Dendritic cell treated with granulocyte-macrophage colony-stimulating factor and Interleukin-4, amounts not matched to agents 40 ng/mL and 50 ng/mL, for 4 days (primary cell): ENCODE measurements at regions of chr14 and their contacts with region 1.

Region 1: DNA sequence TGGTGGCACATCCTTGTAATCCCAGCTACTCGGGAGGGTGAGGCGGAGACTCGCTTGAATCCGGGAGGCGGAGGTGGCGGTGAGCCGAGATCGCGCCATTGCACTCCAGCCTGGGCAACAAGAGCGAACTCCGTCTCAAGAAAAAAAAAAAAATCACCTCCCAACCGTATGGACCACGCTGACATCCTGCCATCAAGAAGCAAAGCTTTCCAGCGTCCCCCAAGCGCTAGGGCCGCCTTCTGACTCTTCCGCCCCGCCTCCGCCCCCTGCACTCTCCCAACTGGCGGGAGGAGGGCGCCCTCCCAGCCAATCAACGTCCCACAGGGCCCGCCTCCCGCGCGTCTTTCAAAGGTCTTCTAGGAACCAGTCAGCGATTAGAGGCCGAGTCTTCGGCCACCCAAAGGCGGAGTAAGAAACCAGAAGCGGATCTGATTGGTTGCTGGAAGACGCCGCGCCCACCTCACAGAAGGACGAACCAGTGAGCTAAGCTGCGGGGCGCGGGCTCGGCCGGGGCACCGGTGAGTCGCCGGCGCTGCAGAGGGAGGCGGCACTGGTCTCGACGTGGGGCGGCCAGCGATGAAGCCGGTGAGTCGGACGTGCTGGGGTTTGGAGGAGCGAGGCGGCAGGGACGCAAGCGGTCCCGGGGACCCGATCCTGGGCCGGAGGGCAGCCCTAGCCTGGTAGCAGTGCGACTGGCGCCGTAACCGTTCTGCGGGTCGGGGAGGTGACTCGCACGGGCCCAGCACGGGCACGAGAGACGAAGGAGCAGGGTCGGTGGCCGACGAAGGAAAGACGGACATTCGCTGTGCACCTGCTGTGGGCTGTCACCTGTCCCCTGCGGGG is at the start of gene CDKN3:
- H3K4me3 Mint-ChIP-seq: peak within 1 kb of the TSS; percentile 87
- H3K27ac Mint-ChIP-seq: peak within 1 kb of the TSS; percentile 73
- H3K4me1 Mint-ChIP-seq: peaks cover 19% of the 10 kb centered on the region
- H3K27me3 Mint-ChIP-seq: no peaks in the 10 kb centered on the region

Region 2: DNA sequence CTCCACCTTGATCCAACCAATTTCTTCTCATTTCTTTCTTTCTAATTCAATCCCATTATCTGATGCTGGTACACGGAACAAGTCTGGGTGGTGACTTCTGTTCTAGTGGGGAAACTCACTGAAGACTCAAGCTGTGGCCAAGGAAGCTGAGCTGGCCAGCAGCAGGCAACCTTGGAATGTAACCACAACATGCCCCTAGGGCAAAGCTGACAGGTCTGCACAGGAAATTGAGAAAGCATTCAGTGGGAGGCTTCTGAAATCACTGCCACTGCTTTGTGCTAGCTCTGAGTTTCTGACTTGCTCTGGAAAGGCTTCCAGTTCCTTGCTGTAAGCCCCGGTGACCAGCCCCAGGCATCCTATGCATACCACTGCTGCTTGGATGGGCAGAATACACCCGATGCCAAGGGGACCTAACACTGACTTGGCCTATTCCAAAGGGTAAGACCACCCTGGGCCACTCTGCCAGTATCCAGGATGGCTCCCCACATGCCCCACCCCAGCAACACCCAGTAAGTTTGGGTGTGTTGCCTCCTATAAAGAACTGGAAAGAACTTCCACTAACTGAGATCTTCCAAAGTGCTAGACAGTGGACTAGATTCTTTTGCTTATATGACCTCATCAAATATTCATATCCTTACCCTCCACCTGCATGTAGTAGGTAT is 84.4 kb before region 1 on chr14:
- intact Hi-C with region 1: no loop called
- H3K4me3 Mint-ChIP-seq: no peak overlapping the region
- H3K27ac Mint-ChIP-seq: no peak overlapping the region
- H3K4me1 Mint-ChIP-seq: no peaks in the 10 kb centered on the region
- H3K27me3 Mint-ChIP-seq: peaks cover 7% of the 10 kb centered on the region

Region 3: GRCh38 chr14:54356172-54356571 is 40.5 kb before region 1 on chr14:
- intact Hi-C with region 1: no loop called
- H3K4me3 Mint-ChIP-seq: no peak overlapping the region
- H3K27ac Mint-ChIP-seq: no peak overlapping the region
- H3K4me1 Mint-ChIP-seq: peaks cover 26% of the 10 kb centered on the region
- H3K27me3 Mint-ChIP-seq: no peaks in the 10 kb centered on the region

Region 4: GRCh38 chr14:54366736-54367735 is 29.7 kb before region 1 on chr14:
- intact Hi-C with region 1: no loop called
- H3K4me3 Mint-ChIP-seq: no peak overlapping the region
- H3K27ac Mint-ChIP-seq: no peak overlapping the region
- H3K4me1 Mint-ChIP-seq: peaks cover 14% of the 10 kb centered on the region
- H3K27me3 Mint-ChIP-seq: peaks cover 2% of the 10 kb centered on the region

Region 5: GRCh38 chr14:54420013-54420809 is 23.5 kb after region 1 on chr14:
- intact Hi-C with region 1: no loop called
- H3K4me3 Mint-ChIP-seq: no peak overlapping the region
- H3K27ac Mint-ChIP-seq: peak overlapping the region; percentile 22
- H3K4me1 Mint-ChIP-seq: peaks cover 8% of the 10 kb centered on the region
- H3K27me3 Mint-ChIP-seq: no peaks in the 10 kb centered on the region

Region 6: GRCh38 chr14:54440873-54441868 is 44.5 kb after region 1 on chr14 and contains the start of gene CNIH1:
- intact Hi-C with region 1: loop called (anchors 2 kb)
- H3K4me3 Mint-ChIP-seq: peak within 1 kb of the TSS; percentile 79
- H3K27ac Mint-ChIP-seq: peak within 1 kb of the TSS; percentile 73
- H3K4me1 Mint-ChIP-seq: peaks cover 40% of the 10 kb centered on the region
- H3K27me3 Mint-ChIP-seq: no peaks in the 10 kb centered on the region